CD4-positive, alpha-beta memory T cell (primary cell): ENCODE measurements at regions of chr11 and their contacts with region 1.

Region 1: DNA sequence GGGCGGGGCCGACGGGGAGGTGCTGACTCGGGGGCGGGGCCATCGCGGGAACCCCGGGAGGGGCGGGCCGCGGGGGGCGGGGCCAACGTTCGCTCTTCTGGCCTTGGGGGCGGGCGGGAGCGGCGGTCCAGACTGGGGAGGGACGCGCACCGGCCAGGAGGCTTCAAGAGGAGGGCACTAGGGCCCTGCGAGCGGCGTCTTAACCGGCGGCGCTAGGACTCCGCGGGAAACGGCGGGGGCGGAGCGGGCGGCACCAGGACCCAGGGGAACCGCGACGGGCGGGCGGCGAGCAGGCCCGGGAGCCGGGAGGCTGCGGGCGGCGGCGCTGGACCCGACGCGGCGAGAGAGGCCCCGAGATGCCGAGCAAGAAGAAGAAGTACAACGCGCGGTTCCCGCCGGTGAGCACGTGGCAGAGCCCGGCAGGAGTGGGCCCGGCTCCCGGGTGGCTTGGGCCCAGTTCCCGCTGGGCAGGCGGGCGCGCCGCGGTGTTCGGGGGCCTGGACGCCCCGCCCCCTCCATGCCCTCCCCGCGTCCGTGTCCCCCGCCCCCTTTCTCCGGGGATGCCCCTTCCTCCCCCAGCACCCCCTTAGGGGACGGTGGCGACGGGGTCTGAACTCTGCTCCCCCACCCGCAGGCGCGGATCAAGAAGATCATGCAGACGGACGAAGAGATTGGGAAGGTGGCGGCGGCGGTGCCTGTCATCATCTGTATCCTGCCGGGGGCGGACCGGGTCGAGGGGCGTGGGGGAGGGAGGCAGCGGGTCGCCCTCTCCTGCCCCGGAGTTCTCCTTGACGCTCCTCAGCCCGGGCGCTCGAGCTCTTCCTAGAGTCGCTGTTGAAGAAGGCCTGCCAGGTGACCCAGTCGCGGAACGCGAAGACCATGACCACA is at the start of gene DRAP1:
- DNase-seq: peak; percentile 97 to 99 (median 98)
- H3K4me3 ChIP-seq: peak within 1 kb of the TSS; percentile 76 to 89
- H3K4me3 Mint-ChIP-seq: peak within 1 kb of the TSS; percentile 89 to 95 (median 92)
- H3K27ac ChIP-seq: peak within 1 kb of the TSS; percentile 86
- H3K27ac Mint-ChIP-seq: peak within 1 kb of the TSS; percentile 89 to 95 (median 93)
- H3K4me1 ChIP-seq: peaks cover 52% of the 10 kb centered on the region
- H3K4me1 Mint-ChIP-seq: peaks cover 15 to 63% (median 39%) of the 10 kb centered on the region in 4 donors
- H3K27me3 ChIP-seq: no peaks in the 10 kb centered on the region
- H3K27me3 Mint-ChIP-seq: no peaks in the 10 kb centered on the region
- total RNA-seq, gene DRAP1: 78.2 to 78.7 TPM

Region 2: DNA sequence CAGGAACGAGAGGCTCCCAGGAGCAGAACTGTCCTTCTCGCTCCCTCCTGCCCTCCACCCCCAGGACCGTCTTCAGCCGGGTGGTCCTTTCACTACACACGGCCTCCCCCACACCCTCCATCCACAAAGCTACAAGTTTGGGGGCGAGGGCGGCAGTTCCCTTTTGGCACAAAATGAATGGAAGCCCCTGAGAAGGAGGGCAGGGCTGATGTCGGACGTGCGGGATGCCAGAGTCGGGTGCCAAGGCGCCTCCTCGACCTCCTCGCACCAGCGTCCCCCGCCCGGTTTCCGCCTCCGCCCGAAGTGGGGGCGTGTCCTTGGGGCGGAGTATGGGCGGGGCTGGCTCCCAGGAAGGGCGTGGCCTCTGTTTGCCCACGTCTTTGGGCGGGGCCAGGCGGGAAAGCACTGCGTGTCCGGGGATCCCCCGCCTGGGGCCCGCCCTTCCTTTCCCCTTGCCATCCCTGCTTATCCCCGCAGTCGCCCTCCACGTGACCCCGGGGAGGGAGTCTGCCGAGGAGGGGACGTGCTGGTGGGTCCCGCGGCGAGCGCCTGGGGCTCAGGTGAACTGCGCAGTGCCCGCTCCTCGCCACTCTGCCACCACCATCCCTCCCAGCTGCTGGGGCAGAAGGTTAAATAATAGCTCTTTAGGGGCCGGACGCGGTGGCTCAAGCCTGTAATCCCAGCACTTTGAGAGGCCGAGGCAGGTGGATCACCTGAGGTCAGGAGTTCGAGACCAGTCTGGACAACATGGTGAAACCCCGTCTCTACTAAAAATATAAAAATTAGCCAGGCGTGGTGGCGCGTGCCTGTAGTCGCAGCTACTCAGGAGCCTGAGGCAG is 45.9 kb before region 1 on chr11:
- CTCF ChIA-PET with region 1: no interaction called
- POLR2A ChIA-PET with region 1: interaction called, 10 read pairs
- intact Hi-C with region 1: no loop called
- DNase-seq: peak; percentile 94 to 99 (median 96)
- H3K4me3 ChIP-seq: peak overlapping the region; percentile 57 to 69
- H3K4me3 Mint-ChIP-seq: peak overlapping the region; percentile 71 to 95 (median 89)
- H3K27ac ChIP-seq: peak overlapping the region; percentile 77
- H3K27ac Mint-ChIP-seq: peak overlapping the region; percentile 85 to 96 (median 94)
- H3K4me1 ChIP-seq: peaks cover 20% of the 10 kb centered on the region
- H3K4me1 Mint-ChIP-seq: peaks cover 7 to 45% (median 20%) of the 10 kb centered on the region in 4 donors
- H3K27me3 ChIP-seq: no peaks in the 10 kb centered on the region
- H3K27me3 Mint-ChIP-seq: no peaks in the 10 kb centered on the region

Region 3: DNA sequence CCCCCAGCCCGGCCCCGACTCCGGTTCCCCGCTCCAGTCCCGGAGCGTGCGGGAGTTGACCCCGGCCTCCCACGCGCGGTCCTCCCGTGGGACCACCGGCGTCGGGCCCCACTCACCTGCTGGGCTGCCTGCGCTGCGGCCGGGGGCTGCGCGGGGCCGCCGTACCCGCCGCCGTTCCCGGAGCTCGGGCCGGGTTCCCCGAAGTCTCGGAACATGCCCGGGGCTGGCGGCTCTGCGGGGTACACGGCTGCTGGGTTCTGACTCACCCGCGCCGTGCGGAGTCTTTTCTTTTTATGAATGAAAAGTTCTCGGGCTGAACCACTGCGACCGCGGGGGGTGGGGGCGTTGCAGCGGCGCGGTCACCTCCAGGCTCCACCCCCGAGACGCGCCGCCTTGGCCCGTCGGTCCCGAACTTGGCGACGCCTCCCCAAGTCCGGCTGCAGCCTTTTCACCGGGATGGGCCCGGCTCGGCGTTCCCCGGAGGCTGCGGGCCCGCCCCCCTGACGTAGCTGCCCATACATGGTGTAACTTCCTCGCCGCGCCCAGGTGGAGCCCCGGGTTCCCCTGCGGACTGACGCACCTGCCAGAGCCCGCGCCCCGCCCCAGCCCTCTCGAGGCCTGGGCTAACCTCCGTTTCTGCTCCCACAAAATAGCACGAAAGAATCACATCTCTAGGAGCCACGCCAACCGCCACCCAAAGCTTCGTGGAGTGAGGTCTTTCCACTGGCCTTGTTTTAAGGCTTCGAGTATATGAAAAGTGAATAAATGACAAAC is 19.1 kb before region 1 on chr11 and contains the start of gene FOSL1:
- CTCF ChIA-PET with region 1: interaction called, 8 read pairs
- POLR2A ChIA-PET with region 1: interaction called, 23 read pairs
- intact Hi-C with region 1: loop called (anchors 1 kb)
- DNase-seq: peak; percentile 91 to 98 (median 92)
- H3K4me3 ChIP-seq: peak within 1 kb of the TSS; percentile 17 to 51
- H3K4me3 Mint-ChIP-seq: peak within 1 kb of the TSS; percentile 57 to 84 (median 65)
- H3K27ac ChIP-seq: peak within 1 kb of the TSS; percentile 46
- H3K27ac Mint-ChIP-seq: peak within 1 kb of the TSS; percentile 69 to 93 (median 88)
- H3K4me1 ChIP-seq: peaks cover 21% of the 10 kb centered on the region
- H3K4me1 Mint-ChIP-seq: peaks cover 5 to 28% (median 7%) of the 10 kb centered on the region in 4 donors
- H3K27me3 ChIP-seq: peaks cover 4% of the 10 kb centered on the region
- H3K27me3 Mint-ChIP-seq: peaks cover 0 to 1% of the 10 kb centered on the region in 2 donors
- total RNA-seq, gene FOSL1: 0.39 to 0.79 TPM

Region 4: DNA sequence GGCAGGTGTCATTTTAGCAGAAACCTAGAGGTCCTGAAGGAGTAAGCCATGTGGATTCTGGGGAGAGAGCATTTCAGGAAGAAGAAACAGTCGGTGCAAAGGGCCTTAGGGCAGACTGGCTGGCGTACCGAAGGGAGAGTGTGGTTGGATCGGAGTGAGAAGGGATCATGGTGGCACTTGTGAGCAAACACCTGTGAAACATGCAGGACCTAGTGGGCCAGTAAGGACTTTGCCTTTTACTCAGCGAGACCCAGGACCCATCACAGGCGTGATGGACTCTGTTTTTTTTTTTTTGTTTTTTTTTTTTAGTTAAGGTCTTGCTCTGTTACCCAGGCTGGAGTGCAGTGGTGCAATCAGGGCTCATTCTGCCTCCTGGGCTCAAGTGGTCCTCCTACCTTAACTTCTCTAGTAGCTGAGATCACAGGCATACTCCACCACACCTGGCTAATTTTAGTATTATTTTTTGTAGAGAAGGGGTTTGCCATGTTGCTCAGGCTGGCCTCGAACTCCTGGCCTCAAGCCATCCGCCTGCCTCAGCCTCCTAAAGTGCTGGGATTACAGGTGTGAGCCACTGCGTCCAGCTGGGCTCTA is 22.4 kb after region 1 on chr11:
- CTCF ChIA-PET with region 1: no interaction called
- POLR2A ChIA-PET with region 1: no interaction called
- intact Hi-C with region 1: no loop called
- DNase-seq: no peak
- H3K4me3 ChIP-seq: no peak overlapping the region
- H3K4me3 Mint-ChIP-seq: no peak overlapping the region
- H3K27ac ChIP-seq: no peak overlapping the region
- H3K27ac Mint-ChIP-seq: no peak overlapping the region
- H3K4me1 ChIP-seq: no peaks in the 10 kb centered on the region
- H3K4me1 Mint-ChIP-seq: no peaks in the 10 kb centered on the region
- H3K27me3 ChIP-seq: no peaks in the 10 kb centered on the region
- H3K27me3 Mint-ChIP-seq: no peaks in the 10 kb centered on the region

Region 5: DNA sequence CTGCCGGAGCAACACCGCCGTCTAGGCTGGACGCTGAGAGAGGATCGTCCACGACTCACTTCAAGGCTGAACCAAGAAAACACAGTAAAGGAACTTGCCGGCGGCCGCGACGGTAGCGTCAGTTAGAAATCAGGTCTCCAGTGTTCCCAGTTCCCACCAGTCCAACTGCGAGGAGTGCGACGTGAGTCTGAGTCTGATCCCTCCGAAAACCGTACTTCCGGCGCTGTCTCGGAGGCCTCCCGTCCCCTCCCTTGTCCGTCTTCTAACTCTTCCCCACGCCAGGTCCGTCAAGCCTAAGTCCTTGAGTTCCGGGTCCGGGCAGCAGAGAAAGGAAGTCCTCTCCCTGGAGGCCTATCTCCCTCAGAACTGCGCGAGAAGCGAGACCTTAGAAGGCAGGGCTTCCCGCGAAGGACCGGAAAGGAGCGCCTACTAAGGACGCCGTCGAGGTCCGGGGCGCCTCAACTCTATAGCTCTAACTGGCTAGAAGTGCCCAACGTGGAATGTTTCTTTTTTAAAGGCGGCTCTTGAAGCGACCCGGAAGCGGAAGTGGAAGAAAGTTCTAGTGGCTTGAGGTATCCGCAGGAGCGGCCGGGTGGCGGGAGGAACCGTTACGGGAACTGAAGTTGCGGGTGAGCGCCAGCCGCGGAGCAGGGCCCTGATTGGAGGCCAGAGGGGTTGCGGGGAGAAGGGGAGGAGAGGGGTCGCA is 82.7 kb after region 1 on chr11 and contains the starts of genes BANF1 and EIF1AD:
- CTCF ChIA-PET with region 1: no interaction called
- POLR2A ChIA-PET with region 1: interaction called, 6 read pairs
- intact Hi-C with region 1: loop called (anchors 1 kb)
- DNase-seq: peak; percentile 95 to 97 (median 96)
- H3K4me3 ChIP-seq: peak within 1 kb of the TSS; percentile 68 to 82
- H3K4me3 Mint-ChIP-seq: peak within 1 kb of the TSS; percentile 94 to 100 (median 99)
- H3K27ac ChIP-seq: peak within 1 kb of the TSS; percentile 87
- H3K27ac Mint-ChIP-seq: peak within 1 kb of the TSS; percentile 96 to 99 (median 99)
- H3K4me1 ChIP-seq: peaks cover 26% of the 10 kb centered on the region
- H3K4me1 Mint-ChIP-seq: peaks cover 12 to 49% (median 27%) of the 10 kb centered on the region in 4 donors
- H3K27me3 ChIP-seq: no peaks in the 10 kb centered on the region
- H3K27me3 Mint-ChIP-seq: no peaks in the 10 kb centered on the region
- total RNA-seq, gene BANF1: 90.8 to 92.9 TPM
- total RNA-seq, gene EIF1AD: 60.2 to 65.4 TPM